ENCODE measurements at regions of chr21 and their contacts with region 1.

Region 1: DNA sequence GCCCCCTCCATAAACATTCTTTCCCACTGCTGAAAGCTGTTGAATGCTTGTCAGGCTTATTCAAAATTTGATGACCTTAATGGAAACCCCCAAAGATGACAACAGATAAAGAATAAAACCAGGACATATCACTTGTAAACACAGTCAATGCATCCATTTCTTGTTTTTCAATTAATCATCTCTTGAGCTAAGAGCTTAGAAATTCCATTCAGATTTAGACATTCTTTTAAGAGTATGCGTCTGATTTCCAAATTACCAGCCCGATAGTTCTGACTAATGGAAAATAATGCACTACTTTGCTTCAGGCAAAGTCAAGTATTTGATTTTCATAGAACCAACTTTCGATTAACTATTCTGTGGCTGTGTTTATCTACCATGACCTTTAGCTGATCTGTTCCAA is 100.6 kb upstream of the RUNX1 start:
- DNase-seq: no peak
- H3K4me3 Mint-ChIP-seq: no peak overlapping the region
- H3K27ac Mint-ChIP-seq: peak overlapping the region; percentile 60
- H3K4me1 Mint-ChIP-seq: peaks cover 50% of the 10 kb centered on the region
- H3K27me3 Mint-ChIP-seq: no peaks in the 10 kb centered on the region
- CTCF ChIP-seq: no peak

Region 2: DNA sequence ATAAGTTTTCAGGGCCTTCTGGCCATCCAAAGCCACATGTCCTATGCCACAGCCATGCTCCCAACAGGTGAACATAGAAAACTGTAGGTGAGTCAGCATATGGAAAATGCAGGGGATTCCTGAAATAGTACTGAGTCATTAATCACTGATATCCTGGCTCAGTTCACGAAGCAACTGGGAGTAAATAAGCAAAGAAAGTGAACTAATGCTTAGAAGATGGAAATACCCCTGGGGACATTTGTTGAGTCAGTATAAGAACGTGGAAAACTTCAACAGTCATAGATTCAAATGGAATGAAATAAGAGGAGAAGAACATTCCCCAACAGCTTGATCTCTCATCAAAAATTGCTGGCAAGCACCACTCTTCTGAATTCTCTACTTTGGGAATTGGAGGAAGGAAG is 48.3 kb after region 1 on chr21:
- CTCF ChIA-PET with region 1: no interaction called
- intact Hi-C with region 1: loop called (anchors 5 kb)
- DNase-seq: peak; percentile 33
- H3K4me3 Mint-ChIP-seq: no peak overlapping the region
- H3K27ac Mint-ChIP-seq: peak overlapping the region; percentile 80
- H3K4me1 Mint-ChIP-seq: peaks cover 47% of the 10 kb centered on the region
- H3K27me3 Mint-ChIP-seq: no peaks in the 10 kb centered on the region
- CTCF ChIP-seq: no peak

Region 3: GRCh38 chr21:35829067-35829466 is 679.4 kb after region 1 on chr21:
- CTCF ChIA-PET with region 1: no interaction called
- intact Hi-C with region 1: no loop called
- DNase-seq: no peak
- H3K4me3 Mint-ChIP-seq: no peak overlapping the region
- H3K27ac Mint-ChIP-seq: no peak overlapping the region
- H3K4me1 Mint-ChIP-seq: peaks cover 13% of the 10 kb centered on the region
- H3K27me3 Mint-ChIP-seq: peaks cover 16% of the 10 kb centered on the region
- CTCF ChIP-seq: no peak